ENCODE measurements at regions of chr3 and their contacts with region 1.

Region 1: DNA sequence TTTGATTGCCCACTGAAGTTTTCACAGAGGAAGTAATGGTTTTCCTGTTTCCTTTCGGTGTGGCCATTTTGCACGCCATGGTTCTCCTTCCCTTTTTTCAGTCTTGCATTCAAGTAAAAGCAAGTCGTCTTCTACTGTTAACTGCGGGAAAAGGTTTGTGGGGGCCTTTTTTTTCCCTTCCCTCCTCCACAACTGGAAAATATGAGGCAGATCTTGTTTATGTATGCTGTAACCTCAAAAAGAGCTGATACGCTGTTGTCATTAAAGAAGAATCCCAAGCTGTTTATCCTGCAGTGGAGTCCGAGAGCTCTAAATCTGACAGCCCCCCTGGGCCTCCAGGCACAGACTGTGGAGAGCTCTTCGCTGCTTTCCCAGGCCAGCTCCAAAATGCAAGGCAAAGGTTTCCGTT is 40.4 kb downstream of the FILIP1L start:
- DNase-seq: no peak
- H3K4me3 ChIP-seq: peak overlapping the region in 1 of 59 donors; percentile 3
- H3K27ac ChIP-seq: peak overlapping the region in 41 of 59 donors; percentile 8 to 76 (median 52)
- H3K27me3 ChIP-seq: no peaks in the 10 kb centered on the region
- CTCF ChIP-seq: no peak

Region 2: DNA sequence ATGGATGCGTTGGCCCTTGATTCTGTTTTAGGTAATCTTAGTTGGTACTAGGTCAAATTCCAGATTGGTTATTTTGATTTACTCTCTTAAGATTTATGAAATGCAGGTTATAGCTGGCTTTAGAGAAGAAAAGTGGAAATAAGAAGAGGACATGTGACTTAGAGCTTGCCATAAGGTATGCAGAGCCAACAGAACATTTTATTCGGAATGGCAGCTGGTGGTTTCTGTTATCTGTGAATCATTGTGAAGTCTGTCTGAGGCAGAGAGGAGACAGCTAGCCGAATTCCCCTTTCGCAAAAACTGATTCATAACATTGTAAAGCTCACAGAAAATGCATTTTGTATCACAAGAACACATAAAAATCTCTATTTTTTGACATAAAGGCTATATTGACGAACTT is 41.7 kb before region 1 on chr3:
- intact Hi-C with region 1: no loop called
- DNase-seq: peak in 1 of 10 donors; percentile 25
- H3K4me3 ChIP-seq: no peak overlapping the region
- H3K27ac ChIP-seq: peak overlapping the region in 13 of 59 donors; percentile 4 to 64 (median 37)
- H3K27me3 ChIP-seq: no peaks in the 10 kb centered on the region
- CTCF ChIP-seq: no peak

Region 3: GRCh38 chr3:100150473-100150872 is 76.6 kb after region 1 on chr3:
- intact Hi-C with region 1: no loop called
- DNase-seq: no peak
- H3K4me3 ChIP-seq: no peak overlapping the region
- H3K27ac ChIP-seq: peak overlapping the region in 26 of 59 donors; percentile 7 to 69 (median 36)
- H3K27me3 ChIP-seq: no peaks in the 10 kb centered on the region
- CTCF ChIP-seq: no peak

Region 4: GRCh38 chr3:100245927-100246326 is 172.0 kb after region 1 on chr3:
- intact Hi-C with region 1: loop called (anchors 5 kb)
- DNase-seq: no peak
- H3K4me3 ChIP-seq: no peak overlapping the region
- H3K27ac ChIP-seq: no peak overlapping the region
- H3K27me3 ChIP-seq: no peaks in the 10 kb centered on the region
- CTCF ChIP-seq: no peak